HepG2 (cell line): ENCODE measurements at regions of chr11 and their contacts with region 1.

Region 1: DNA sequence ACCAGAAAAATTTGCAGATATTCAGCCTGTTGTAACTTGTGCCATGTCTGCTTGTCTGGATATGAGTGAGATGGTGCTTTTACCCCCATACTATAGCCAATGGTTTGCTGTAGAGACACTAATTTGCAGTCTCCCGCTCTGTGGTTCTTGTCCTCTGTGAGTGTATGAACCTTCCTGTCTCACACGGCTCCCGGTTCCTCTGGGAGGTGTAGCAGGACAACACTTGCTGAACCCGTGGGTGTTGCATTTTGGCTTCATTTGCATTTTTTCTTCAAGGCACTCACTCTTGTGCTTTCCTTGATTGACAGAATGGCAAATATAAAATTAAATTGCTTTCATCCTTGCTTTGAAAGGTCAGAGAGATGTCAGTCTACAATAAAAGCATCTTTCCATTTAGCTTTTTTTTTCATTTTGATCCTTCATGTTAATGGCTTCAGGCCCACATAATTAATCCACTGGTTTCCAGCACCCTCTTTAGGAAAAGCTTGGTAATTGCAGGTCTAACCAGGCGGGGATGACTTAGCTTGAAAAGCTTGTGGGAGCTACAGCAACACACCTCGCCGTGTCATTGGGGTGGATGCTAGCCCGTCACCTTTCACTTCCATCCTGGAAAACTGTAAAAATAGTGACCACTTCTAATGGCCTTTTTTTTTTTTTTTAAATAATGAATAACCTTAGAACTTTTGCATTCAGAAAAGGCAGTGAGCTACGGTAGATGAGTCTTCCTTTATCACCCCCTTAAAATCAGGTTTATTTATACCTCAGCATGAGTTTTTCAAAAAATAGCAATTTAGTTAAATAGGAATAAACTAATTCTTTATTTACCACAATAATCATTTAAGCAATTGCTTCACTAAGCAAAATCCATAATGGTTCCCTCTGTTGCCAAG is 27.4 kb upstream of the ST14 start:
- DNase-seq: peak; percentile 68
- ATAC-seq: peak; percentile 70
- H3K4me3 ChIP-seq: no peak overlapping the region
- H3K27ac ChIP-seq: no peak overlapping the region
- H3K4me1 ChIP-seq: peaks cover 38% of the 10 kb centered on the region
- H3K27me3 ChIP-seq: no peaks in the 10 kb centered on the region
- CTCF ChIP-seq: peak; percentile 82
- EP300 ChIP-seq: no peak
- POLR2A ChIP-seq: no peak
- RAD21 ChIP-seq: peak; percentile 65

Region 2: GRCh38 chr11:129785383-129786111 is 346.7 kb before region 1 on chr11:
- CTCF ChIA-PET with region 1: no interaction called
- POLR2A ChIA-PET with region 1: no interaction called
- in situ Hi-C with region 1: loop called (anchors 25 kb)
- intact Hi-C with region 1: loop called (anchors 5 kb)
- DNase-seq: peak; percentile 41
- ATAC-seq: peak; percentile 59
- H3K4me3 ChIP-seq: no peak overlapping the region
- H3K27ac ChIP-seq: no peak overlapping the region
- H3K4me1 ChIP-seq: peaks cover 39% of the 10 kb centered on the region
- H3K27me3 ChIP-seq: no peaks in the 10 kb centered on the region
- CTCF ChIP-seq: peak; percentile 53
- EP300 ChIP-seq: no peak
- POLR2A ChIP-seq: no peak
- RAD21 ChIP-seq: no peak

Region 3: GRCh38 chr11:129922674-129923073 is 209.5 kb before region 1 on chr11:
- CTCF ChIA-PET with region 1: interaction called, 33 read pairs
- POLR2A ChIA-PET with region 1: interaction called, 3 read pairs
- in situ Hi-C with region 1: loop called (anchors 5 kb)
- intact Hi-C with region 1: loop called (anchors 1 kb)
- DNase-seq: no peak
- ATAC-seq: no peak
- H3K4me3 ChIP-seq: no peak overlapping the region
- H3K27ac ChIP-seq: no peak overlapping the region
- H3K4me1 ChIP-seq: no peaks in the 10 kb centered on the region
- H3K27me3 ChIP-seq: no peaks in the 10 kb centered on the region
- CTCF ChIP-seq: no peak
- EP300 ChIP-seq: no peak
- POLR2A ChIP-seq: no peak
- RAD21 ChIP-seq: no peak

Region 4: GRCh38 chr11:129929721-129930120 is 202.5 kb before region 1 on chr11:
- CTCF ChIA-PET with region 1: interaction called, 33 read pairs
- POLR2A ChIA-PET with region 1: no interaction called
- in situ Hi-C with region 1: loop called (anchors 5 kb)
- intact Hi-C with region 1: no loop called
- DNase-seq: no peak
- ATAC-seq: no peak
- H3K4me3 ChIP-seq: no peak overlapping the region
- H3K27ac ChIP-seq: no peak overlapping the region
- H3K4me1 ChIP-seq: no peaks in the 10 kb centered on the region
- H3K27me3 ChIP-seq: no peaks in the 10 kb centered on the region
- CTCF ChIP-seq: no peak
- EP300 ChIP-seq: no peak
- POLR2A ChIP-seq: no peak
- RAD21 ChIP-seq: no peak

Region 5: DNA sequence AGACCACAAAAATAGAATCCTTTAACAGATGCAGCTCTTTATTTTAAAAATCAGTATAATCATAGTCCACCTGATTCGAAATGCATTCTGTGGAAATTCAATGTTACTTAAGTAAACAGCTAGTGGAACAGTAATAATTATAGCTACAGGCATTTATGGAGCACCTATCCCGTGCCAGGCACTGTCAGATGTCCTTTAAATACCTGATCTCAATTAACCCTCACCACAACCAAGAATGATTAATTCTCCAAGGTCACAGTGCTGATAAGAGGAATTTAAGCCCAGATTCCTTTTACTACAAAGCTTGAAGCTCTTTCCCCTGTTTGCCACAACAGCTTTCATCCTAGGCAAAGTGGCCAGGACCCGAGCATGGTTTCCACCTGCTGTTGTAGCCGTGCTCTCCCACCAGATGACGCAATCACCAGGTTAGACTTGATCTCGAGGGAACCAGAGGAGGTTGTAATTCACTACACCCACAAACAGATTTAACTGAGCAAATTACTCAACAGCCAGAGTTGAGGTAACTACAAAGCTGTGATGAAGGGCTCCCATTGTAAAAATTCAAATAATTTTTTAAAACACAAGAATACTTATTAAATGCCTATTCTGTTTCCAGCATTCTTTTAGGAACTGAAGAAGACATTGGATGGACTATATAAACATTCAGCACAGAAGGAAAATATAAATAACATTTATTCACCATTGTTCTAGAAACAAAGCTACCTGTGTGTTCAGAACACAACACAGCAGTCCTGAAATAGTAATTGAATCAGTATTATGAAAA is 139.9 kb before region 1 on chr11:
- CTCF ChIA-PET with region 1: interaction called, 14 read pairs
- POLR2A ChIA-PET with region 1: interaction called, 10 read pairs
- in situ Hi-C with region 1: loop called (anchors 5 kb)
- intact Hi-C with region 1: loop called (anchors 1 kb)
- DNase-seq: peak; percentile 82
- ATAC-seq: peak; percentile 90
- H3K4me3 ChIP-seq: no peak overlapping the region
- H3K27ac ChIP-seq: peak overlapping the region; percentile 3
- H3K4me1 ChIP-seq: peaks cover 47% of the 10 kb centered on the region
- H3K27me3 ChIP-seq: no peaks in the 10 kb centered on the region
- CTCF ChIP-seq: peak; percentile 84
- EP300 ChIP-seq: no peak
- POLR2A ChIP-seq: no peak
- RAD21 ChIP-seq: peak; percentile 53

Region 6: DNA sequence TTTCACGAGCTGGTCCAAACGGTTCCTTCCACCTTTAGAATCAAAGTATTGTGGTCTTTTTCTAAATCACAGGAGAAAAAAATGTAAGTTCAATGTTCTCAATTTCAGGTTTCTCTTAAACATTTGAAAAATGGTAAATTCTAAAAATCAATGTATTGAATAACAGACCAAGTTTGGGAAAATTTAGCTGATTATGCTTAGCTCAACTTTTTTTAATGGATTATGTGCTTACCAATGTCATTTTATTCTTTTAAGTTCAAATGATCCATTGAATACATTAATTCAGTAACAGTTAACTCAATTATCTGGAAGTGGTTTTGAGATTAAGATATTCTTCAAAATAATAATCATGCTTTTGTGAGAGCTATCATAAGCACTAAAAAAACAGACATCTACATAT is 134.7 kb before region 1 on chr11:
- CTCF ChIA-PET with region 1: interaction called, 14 read pairs
- POLR2A ChIA-PET with region 1: interaction called, 28 read pairs
- in situ Hi-C with region 1: loop called (anchors 5 kb)
- intact Hi-C with region 1: loop called (anchors 1 kb)
- DNase-seq: no peak
- ATAC-seq: no peak
- H3K4me3 ChIP-seq: no peak overlapping the region
- H3K27ac ChIP-seq: no peak overlapping the region
- H3K4me1 ChIP-seq: peaks cover 75% of the 10 kb centered on the region
- H3K27me3 ChIP-seq: no peaks in the 10 kb centered on the region; a peak in 1 of 5 replicates
- CTCF ChIP-seq: no peak
- EP300 ChIP-seq: no peak
- POLR2A ChIP-seq: no peak
- RAD21 ChIP-seq: no peak

Region 7: DNA sequence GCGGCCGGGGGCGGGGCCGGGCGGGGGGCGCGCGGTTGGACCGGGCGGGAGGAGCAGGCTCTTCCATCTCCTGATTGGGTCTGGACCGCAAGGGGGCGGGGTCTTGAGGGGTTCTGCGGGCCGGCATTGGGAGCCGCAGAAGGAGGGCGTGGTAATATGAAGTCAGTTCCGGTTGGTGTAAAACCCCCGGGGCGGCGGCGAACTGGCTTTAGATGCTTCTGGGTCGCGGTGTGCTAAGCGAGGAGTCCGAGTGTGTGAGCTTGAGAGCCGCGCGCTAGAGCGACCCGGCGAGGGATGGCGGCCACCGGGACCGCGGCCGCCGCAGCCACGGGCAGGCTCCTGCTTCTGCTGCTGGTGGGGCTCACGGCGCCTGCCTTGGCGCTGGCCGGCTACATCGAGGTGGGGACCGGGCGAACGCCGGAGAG is 62.5 kb before region 1 on chr11 and contains the start of gene APLP2:
- CTCF ChIA-PET with region 1: interaction called, 3 read pairs
- POLR2A ChIA-PET with region 1: interaction called, 5 read pairs
- in situ Hi-C with region 1: no loop called
- intact Hi-C with region 1: loop called (anchors 1 kb)
- DNase-seq: peak; percentile 97
- ATAC-seq: peak; percentile 78
- H3K4me3 ChIP-seq: peak within 1 kb of the TSS; percentile 84 to 98 (median 97)
- H3K27ac ChIP-seq: peak within 1 kb of the TSS; percentile 71
- H3K4me1 ChIP-seq: peaks cover 39% of the 10 kb centered on the region
- H3K27me3 ChIP-seq: no peaks in the 10 kb centered on the region
- CTCF ChIP-seq: 0 out of 2 replicates have a peak, but pooled peaks have one; percentile 10
- EP300 ChIP-seq: no peak
- POLR2A ChIP-seq: peak; percentile 98 to 99
- RAD21 ChIP-seq: peak; percentile 57
- total RNA-seq, gene APLP2: 154 and 315 TPM in 2 replicates